ENCODE measurements at regions of chr1 and their contacts with region 1.

Region 1: DNA sequence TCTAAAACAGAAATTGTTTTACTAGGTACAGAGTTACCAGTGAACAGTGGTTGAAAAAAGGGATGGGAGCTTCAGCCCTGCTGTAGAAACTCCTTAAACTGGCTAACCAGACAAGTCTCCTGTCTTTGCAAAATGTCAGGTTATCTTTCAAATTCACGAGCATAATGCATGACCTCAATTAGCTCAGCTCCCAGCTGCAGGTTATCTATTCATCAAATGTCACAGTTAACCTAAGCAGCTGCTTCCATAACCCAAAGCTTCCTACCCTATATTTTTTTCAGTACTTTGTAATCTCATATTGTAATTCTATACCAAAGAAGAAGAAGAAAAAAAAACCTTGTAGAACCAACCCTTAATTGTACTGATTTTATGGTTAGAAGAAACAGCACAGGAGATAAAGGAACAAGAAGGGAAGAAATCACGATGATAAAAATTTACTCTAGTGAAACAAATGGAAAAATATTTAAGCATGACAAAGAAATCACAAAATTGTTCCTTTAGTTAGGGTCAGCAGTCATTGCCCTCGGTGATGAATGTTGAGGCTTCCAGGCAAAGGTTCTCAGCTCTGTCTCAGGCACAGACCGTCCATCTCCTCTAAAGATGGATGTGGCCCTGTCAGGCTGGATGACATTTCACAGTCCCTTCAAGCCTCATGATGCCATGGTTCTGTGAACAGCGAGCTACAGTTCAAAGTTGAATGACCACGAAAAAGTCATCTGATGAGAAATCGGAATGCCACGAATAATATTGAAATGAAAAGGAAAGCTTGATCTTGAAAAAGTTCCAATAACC is 95.9 kb downstream of the PLD5 start:
- DNase-seq: no peak
- CTCF ChIP-seq: no peak

Region 2: DNA sequence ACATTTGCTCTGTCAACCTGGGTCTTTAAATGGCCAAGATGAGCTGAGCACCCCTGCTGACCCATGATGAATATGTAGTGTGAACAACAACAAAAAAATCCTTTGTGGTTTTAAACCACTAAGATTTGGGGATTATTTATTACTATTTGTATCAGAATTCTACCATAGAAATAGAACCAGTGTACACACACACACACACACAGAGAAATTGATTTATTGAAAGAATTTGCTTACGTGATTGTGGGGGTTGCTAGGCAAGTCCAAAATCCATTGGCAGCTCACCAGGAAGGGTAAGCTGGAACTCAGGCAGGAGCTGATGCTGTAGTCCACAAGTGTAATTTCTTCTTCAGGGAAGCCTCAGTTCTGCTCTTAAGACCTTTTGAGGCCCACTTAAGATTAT is 347.1 kb before region 1 on chr1:
- CTCF ChIA-PET with region 1: no interaction called
- POLR2A ChIA-PET with region 1: no interaction called
- DNase-seq: no peak
- CTCF ChIP-seq: no peak

Region 3: GRCh38 chr1:242349636-242350035 is 79.0 kb before region 1 on chr1:
- CTCF ChIA-PET with region 1: no interaction called
- POLR2A ChIA-PET with region 1: no interaction called
- DNase-seq: no peak
- CTCF ChIP-seq: no peak

Region 4: GRCh38 chr1:242440757-242441156 is 12.2 kb after region 1 on chr1:
- CTCF ChIA-PET with region 1: interaction called, 14 read pairs
- POLR2A ChIA-PET with region 1: no interaction called
- DNase-seq: no peak
- CTCF ChIP-seq: no peak

Region 5: DNA sequence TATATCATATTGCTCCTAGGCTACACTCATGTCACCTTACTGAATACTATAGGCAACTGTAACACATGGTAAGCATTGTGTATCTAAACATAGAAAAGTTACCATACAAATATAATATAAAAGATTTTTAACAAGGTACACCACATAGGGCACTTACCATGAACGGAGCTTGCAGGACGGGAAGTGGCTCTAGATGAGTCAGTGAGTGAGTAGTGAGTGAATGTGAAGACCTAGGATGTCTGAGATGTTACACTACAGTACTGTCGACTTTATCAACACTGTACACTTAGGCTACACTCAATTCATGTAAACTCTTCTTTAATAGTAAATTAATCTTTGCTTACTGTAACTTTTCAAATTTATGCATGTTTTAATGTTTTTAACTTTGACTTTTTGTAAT is 176.9 kb after region 1 on chr1:
- CTCF ChIA-PET with region 1: no interaction called
- POLR2A ChIA-PET with region 1: no interaction called
- DNase-seq: no peak
- CTCF ChIP-seq: no peak

Region 6: GRCh38 chr1:242754125-242754524 is 325.5 kb after region 1 on chr1:
- CTCF ChIA-PET with region 1: no interaction called
- POLR2A ChIA-PET with region 1: no interaction called
- DNase-seq: no peak
- CTCF ChIP-seq: no peak